ENCODE measurements at regions of chr10 and their contacts with region 1.

Region 1: DNA sequence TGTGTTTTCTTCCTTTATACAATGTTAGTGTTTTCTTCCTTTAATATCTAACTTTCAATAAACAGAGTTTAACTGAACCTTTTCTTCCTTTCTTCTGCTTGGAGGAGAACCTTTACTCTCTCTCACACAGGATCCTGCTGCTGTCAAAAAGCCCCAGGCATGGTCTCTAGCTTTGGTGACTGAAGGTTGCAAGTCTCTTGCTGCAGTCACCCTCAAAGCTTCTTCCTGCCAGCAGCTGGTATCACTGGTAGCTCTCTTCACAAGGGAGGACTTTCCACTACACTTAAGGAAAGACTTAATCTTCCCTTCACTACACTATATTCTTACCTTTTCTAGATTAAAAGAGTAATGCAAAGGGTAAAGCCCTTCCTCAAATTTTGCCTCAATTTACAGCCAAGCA is 153.4 kb downstream of the SGMS1 start:
- DNase-seq: no peak
- H3K4me3 Mint-ChIP-seq: peak overlapping the region; percentile 41
- H3K27ac Mint-ChIP-seq: peak overlapping the region; percentile 92
- H3K4me1 Mint-ChIP-seq: peaks cover 37% of the 10 kb centered on the region
- H3K27me3 Mint-ChIP-seq: no peaks in the 10 kb centered on the region
- CTCF ChIP-seq: no peak

Region 2: GRCh38 chr10:50431791-50432190 is 38.6 kb before region 1 on chr10:
- CTCF ChIA-PET with region 1: no interaction called
- intact Hi-C with region 1: loop called (anchors 5 kb)
- DNase-seq: no peak
- H3K4me3 Mint-ChIP-seq: no peak overlapping the region
- H3K27ac Mint-ChIP-seq: peak overlapping the region; percentile 34
- H3K4me1 Mint-ChIP-seq: no peaks in the 10 kb centered on the region
- H3K27me3 Mint-ChIP-seq: no peaks in the 10 kb centered on the region
- CTCF ChIP-seq: no peak

Region 3: DNA sequence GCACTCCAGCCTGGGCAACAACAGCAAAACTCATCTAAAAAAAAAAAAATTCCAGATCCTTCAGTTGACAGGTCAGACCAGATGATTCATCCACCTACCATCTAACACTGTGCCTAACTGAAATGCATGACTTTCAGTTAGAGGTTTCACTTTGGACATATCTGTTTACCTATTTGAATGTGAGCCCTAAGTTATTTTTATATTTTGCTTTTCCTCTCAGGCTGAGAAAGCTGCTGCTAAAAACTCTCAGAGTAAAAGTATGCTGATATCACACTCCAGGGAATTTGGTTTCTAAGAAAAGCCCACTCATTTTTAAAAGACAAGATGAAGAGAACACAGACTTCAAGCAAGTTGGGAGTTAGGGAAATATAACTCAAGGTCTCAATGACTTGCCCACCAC is 27.4 kb after region 1 on chr10:
- CTCF ChIA-PET with region 1: no interaction called
- intact Hi-C with region 1: loop called (anchors 2 kb)
- DNase-seq: no peak
- H3K4me3 Mint-ChIP-seq: no peak overlapping the region
- H3K27ac Mint-ChIP-seq: no peak overlapping the region
- H3K4me1 Mint-ChIP-seq: peaks cover 33% of the 10 kb centered on the region
- H3K27me3 Mint-ChIP-seq: no peaks in the 10 kb centered on the region
- CTCF ChIP-seq: no peak

Region 4: DNA sequence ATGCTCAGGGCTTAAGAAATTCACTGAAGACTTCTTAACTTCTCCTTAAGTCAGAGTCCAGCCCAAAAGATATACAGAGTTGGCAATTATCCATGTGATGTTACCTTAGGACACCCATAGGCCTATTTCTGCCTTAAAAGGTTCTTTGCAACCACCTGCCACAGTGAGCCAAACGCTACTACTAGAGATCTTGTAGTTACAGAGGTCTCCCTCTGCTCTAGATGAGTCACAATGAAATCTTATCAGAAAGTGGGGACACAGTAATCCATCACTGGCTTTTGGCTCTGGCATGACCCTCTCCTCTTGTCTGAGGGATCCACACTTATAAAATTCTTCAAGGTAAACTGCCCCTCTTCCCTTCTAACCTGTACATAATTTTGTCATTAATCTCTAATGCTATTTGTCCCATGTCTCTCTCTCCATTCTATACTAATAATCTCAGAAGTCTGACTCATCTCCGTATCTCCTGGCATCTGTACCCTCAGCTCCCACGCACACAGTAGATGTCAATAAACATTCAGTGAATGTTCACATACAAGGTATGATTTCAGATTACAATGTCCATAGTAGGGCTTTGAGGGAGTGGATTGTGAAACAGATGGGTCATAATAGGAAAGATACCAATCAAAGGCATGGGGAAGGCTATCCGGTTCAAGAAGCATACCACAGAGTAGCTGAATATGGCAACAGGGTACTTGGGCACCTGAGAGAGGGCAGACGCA is 41.3 kb after region 1 on chr10:
- CTCF ChIA-PET with region 1: no interaction called
- intact Hi-C with region 1: loop called (anchors 2 kb)
- DNase-seq: peak; percentile 24
- H3K4me3 Mint-ChIP-seq: peak overlapping the region; percentile 13
- H3K27ac Mint-ChIP-seq: peak overlapping the region; percentile 21
- H3K4me1 Mint-ChIP-seq: peaks cover 39% of the 10 kb centered on the region
- H3K27me3 Mint-ChIP-seq: no peaks in the 10 kb centered on the region
- CTCF ChIP-seq: no peak

Measured in Calu3 (cell line).